ENCODE measurements at regions of chr3 and their contacts with region 1.

Region 1: DNA sequence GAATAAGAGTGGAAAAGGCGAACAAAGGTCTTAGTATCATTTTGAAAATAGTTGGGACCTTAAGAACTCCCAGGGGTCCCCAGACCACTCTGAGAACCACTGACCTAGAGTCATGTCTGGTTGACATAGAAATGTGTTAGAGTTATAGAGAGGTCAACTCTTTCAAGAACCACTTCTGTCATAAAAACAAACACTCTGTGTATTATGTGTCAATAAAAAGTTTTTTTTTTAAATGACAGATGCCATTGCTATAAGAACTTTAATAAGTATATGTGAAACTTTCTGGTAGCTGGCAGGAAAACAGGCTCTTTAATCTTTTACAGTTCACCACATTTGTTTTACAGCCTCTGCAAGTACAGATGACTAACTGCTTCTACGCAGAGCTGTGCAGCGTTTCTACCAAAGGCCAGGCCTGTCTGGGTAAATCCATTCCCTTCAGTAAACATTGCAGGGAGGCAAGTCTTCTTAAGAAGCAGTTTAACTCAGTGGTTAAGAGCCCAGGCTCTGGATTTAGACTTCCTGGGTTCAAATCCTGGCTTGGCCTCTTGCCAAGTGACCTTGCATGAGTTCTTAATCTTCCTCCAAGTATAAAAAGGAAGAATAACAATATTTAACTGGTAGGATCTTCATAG is 56.6 kb downstream of the RFTN1 start:
- DNase-seq: peak in 3 of 9 experiments; percentile 41 to 52 (median 47)
- ATAC-seq: peak; percentile 92
- H3K4me3 ChIP-seq: no peak overlapping the region
- H3K4me3 Mint-ChIP-seq: no peak overlapping the region
- H3K27ac ChIP-seq: no peak overlapping the region
- H3K27ac Mint-ChIP-seq: no peak overlapping the region
- H3K4me1 ChIP-seq: peaks cover 12% of the 10 kb centered on the region
- H3K4me1 Mint-ChIP-seq: peaks cover 42% of the 10 kb centered on the region
- H3K27me3 ChIP-seq: no peaks in the 10 kb centered on the region
- H3K27me3 Mint-ChIP-seq: no peaks in the 10 kb centered on the region
- CTCF ChIP-seq: no peak

Region 2: DNA sequence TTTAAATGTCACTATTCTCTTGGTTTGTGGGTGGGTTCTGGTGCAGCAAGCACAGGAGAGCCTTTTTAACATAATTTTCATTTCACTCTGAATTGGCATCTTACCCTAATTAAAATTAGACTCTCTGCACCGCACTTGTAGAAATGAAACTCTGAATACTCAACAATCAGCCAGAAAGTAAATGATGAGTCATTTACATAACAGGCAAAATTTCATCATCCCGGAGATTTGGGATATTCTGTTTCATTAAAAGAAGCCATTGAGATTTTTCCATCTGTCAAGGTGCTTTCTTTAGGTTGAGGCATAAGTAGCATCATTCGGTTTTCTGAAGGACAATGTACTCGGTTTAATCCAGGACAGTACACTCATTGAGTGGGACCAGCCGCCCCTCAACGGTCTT is 54.4 kb before region 1 on chr3:
- CTCF ChIA-PET with region 1: no interaction called
- POLR2A ChIA-PET with region 1: no interaction called
- intact Hi-C with region 1: loop called in 1 of 2 experiments (anchors 10 kb)
- DNase-seq: no peak
- ATAC-seq: no peak
- H3K4me3 ChIP-seq: no peak overlapping the region
- H3K4me3 Mint-ChIP-seq: no peak overlapping the region
- H3K27ac ChIP-seq: no peak overlapping the region
- H3K27ac Mint-ChIP-seq: peak overlapping the region; percentile 57
- H3K4me1 ChIP-seq: no peaks in the 10 kb centered on the region
- H3K4me1 Mint-ChIP-seq: peaks cover 34% of the 10 kb centered on the region
- H3K27me3 ChIP-seq: no peaks in the 10 kb centered on the region
- H3K27me3 Mint-ChIP-seq: no peaks in the 10 kb centered on the region
- CTCF ChIP-seq: no peak

Measured in CD8-positive, alpha-beta T cell (primary cell).